Caco-2 (cell line): ENCODE measurements at regions of chr4 and their contacts with region 1.

Region 1: DNA sequence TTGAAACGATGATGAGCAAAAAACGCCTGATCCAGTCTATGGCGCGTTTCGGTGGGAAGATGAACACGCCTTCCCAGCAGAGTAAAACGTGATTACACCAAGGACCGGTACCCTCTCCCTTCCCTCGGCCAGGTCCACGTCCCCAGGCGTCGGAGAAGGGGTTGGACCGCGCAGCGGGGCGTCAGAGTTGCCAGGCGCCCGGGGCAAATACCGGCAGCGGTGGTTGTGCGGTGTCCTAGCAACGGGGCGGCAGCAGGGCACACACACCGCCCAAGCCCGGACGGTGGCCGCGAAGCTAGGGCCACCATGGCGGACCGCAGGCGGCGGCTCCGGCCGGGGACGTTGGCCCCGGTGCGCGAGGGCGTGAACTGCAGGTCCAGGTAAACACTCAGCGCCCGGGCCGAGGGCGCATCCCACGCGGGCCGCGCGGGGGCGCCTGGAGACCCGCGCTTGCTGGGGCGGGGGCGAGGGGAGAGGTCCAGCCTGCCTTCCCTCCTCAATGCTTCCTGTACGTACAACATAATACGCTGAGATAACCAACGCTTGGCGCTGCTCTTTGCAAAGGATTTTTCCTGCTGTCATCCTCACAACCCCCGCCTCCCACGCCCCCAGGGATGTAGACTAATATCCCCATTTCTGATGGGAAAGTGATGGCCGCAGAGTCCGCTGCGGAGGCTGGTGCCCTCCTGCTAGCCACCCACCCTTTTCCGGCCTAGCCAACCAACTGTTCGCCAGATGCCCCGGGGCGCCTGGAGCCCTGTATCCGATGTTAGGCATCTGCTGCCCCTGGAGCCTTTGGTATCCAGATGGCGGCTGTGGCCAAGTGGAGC is at the start of gene FAM47E:
- DNase-seq: peak; percentile 86 to 93
- H3K4me3 ChIP-seq: peak within 1 kb of the TSS; percentile 51
- H3K4me3 Mint-ChIP-seq: peak within 1 kb of the TSS; percentile 91
- H3K27ac Mint-ChIP-seq: peak within 1 kb of the TSS; percentile 96
- H3K4me1 ChIP-seq: peaks cover 12% of the 10 kb centered on the region
- H3K4me1 Mint-ChIP-seq: no peaks in the 10 kb centered on the region
- H3K27me3 ChIP-seq: no peaks in the 10 kb centered on the region
- H3K27me3 Mint-ChIP-seq: no peaks in the 10 kb centered on the region
- CTCF ChIP-seq: peak; percentile 51 to 72
- total RNA-seq, gene FAM47E: 6.3 and 6.6 TPM in 2 replicates

Region 2: DNA sequence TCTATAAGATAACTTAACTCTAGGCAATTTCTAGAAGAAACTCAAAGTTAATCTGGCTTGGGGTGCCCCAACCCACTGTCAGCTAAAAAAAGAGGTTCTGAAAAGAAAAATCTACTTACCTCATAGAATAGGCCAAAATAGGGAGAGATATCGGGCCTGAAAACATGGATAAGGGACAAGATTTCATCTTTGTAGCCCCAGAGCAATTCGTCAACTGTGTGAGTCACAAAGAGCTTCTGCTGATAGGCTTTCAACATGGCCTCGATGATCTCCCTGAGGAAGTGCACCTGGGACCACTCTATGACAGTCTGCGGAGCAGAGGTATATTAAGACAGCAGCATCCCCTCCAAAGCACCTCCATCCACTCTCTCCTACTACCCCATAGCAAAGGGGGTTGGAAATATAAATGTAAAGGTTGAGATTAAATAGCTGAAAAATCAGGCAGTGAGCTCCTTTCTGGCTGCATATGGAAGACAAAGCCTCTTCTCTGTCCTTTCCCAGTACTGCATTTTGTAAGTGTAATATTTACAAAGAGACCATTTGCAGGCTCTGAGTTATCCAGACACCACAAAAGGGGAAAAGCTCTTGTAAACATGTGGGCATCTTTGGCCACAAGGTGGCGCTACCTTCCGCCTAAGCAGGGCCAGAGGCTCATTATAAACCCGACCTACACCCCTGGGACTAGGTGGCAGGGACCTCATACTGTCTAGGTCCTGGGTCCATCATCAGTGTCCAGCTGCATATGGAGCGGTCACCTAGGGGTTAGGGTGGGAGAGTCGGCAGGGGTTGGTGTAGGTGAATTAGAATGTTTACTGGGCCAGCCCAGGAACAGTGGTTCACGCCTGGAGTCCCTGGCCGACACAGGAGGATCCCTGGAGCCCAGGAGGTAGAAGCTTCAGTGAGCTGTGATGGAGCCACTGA is 72.0 kb before region 1 on chr4:
- CTCF ChIA-PET with region 1: interaction called, 4 read pairs
- POLR2A ChIA-PET with region 1: no interaction called
- intact Hi-C with region 1: loop called (anchors 1 kb)
- DNase-seq: peak; percentile 80 to 86
- H3K4me3 ChIP-seq: no peak overlapping the region
- H3K4me3 Mint-ChIP-seq: no peak overlapping the region
- H3K27ac Mint-ChIP-seq: no peak overlapping the region
- H3K4me1 ChIP-seq: no peaks in the 10 kb centered on the region
- H3K4me1 Mint-ChIP-seq: no peaks in the 10 kb centered on the region
- H3K27me3 ChIP-seq: no peaks in the 10 kb centered on the region
- H3K27me3 Mint-ChIP-seq: no peaks in the 10 kb centered on the region
- CTCF ChIP-seq: peak; percentile 82 to 86

Region 3: GRCh38 chr4:76213415-76214176 is 38.1 kb before region 1 on chr4 and contains the start of gene SCARB2:
- CTCF ChIA-PET with region 1: no interaction called
- POLR2A ChIA-PET with region 1: interaction called, 4 read pairs
- intact Hi-C with region 1: loop called (anchors 1 kb)
- DNase-seq: peak; percentile 81 to 91
- H3K4me3 ChIP-seq: peak within 1 kb of the TSS; percentile 84
- H3K4me3 Mint-ChIP-seq: peak within 1 kb of the TSS; percentile 84
- H3K27ac Mint-ChIP-seq: peak within 1 kb of the TSS; percentile 83
- H3K4me1 ChIP-seq: peaks cover 52% of the 10 kb centered on the region
- H3K4me1 Mint-ChIP-seq: peaks cover 56% of the 10 kb centered on the region
- H3K27me3 ChIP-seq: no peaks in the 10 kb centered on the region
- H3K27me3 Mint-ChIP-seq: no peaks in the 10 kb centered on the region
- CTCF ChIP-seq: peak in 1 of 2 experiments; percentile 13
- total RNA-seq, gene SCARB2: 148 and 150 TPM in 2 replicates

Region 4: DNA sequence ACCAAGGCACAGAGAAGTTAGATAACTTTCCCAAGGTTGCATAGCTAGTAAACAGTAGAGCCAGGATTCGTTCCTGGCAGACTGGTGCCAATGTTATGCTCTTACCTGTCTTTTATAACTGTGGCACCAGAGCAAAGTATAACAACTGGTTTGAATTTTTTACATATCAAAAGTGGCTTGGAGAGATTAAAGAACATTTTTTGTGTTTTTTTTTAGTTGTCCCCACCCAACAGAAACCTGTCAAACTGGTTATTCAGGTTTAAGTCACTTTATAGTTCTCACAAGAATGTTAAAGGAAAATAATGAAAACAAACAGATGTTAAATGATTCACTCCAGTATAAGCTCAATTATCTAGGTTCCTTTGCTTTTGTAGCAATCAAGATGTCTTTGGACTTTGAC is 15.7 kb before region 1 on chr4:
- CTCF ChIA-PET with region 1: no interaction called
- POLR2A ChIA-PET with region 1: no interaction called
- intact Hi-C with region 1: loop called (anchors 1 kb)
- DNase-seq: peak in 1 of 2 experiments; percentile 74
- H3K4me3 ChIP-seq: peak overlapping the region; percentile 13; the same call in 1 of the 2 replicates
- H3K4me3 Mint-ChIP-seq: peak overlapping the region; percentile 70
- H3K27ac Mint-ChIP-seq: peak overlapping the region; percentile 95
- H3K4me1 ChIP-seq: peaks cover 59% of the 10 kb centered on the region
- H3K4me1 Mint-ChIP-seq: peaks cover 28% of the 10 kb centered on the region
- H3K27me3 ChIP-seq: no peaks in the 10 kb centered on the region
- H3K27me3 Mint-ChIP-seq: no peaks in the 10 kb centered on the region
- CTCF ChIP-seq: no peak

Region 5: DNA sequence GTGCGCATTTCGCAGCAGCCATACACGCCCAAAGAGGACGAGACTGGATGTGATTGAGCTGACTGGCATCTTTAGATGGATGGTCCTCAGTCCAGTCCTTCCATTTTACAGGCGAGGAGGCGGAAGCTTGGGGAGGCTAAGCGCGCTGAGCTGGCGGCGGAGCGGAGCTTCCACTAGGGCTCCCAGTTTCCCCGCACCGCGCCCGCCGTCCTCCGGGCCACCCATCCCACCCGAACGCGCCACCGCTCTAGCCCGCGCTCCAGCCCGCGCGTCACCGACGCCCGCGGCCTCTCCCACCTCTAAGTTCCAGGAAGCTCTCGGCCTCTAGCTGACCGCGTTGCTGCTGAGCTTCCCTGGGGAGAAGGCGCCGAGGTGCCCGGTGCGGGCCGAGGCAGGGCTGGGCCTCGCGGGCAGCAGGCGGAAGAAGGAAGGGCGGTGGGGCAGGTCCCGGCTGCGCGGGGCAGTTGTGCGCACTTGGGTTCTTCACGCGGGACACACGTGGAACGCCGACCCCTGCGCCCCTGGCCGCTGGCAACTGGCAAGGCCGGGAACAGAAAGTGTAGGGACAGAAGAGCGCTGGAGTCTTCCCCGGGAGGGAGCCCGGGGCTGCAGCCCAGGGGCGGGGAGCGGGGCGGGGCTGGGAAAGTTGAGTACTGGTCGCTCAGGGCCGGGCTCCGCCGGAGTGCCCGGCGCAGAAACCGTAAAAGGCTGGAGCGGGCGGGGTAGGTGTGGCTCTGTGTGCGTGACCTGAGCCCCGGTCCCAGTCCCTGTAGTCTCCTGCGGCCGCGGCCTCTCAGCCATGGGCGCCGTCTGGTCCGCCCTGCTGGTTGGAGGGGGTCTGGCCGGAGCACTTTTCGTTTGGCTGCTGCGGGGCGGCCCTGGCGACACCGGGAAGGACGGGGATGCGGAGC is 54.6 kb after region 1 on chr4 and contains the start of gene STBD1:
- CTCF ChIA-PET with region 1: interaction called, 6 read pairs
- POLR2A ChIA-PET with region 1: no interaction called
- intact Hi-C with region 1: loop called (anchors 1 kb)
- DNase-seq: peak; percentile 85 to 88
- H3K4me3 ChIP-seq: peak within 1 kb of the TSS; percentile 51
- H3K4me3 Mint-ChIP-seq: peak within 1 kb of the TSS; percentile 90
- H3K27ac Mint-ChIP-seq: peak within 1 kb of the TSS; percentile 71
- H3K4me1 ChIP-seq: peaks cover 22% of the 10 kb centered on the region
- H3K4me1 Mint-ChIP-seq: peaks cover 26% of the 10 kb centered on the region
- H3K27me3 ChIP-seq: no peaks in the 10 kb centered on the region
- H3K27me3 Mint-ChIP-seq: no peaks in the 10 kb centered on the region
- CTCF ChIP-seq: no peak
- total RNA-seq, gene STBD1: 3.8 and 4.2 TPM in 2 replicates

Region 6: GRCh38 chr4:76377911-76378310 is 126.3 kb after region 1 on chr4:
- CTCF ChIA-PET with region 1: interaction called, 12 read pairs
- POLR2A ChIA-PET with region 1: no interaction called
- intact Hi-C with region 1: loop called (anchors 1 kb)
- DNase-seq: peak; percentile 60 to 70
- H3K4me3 ChIP-seq: no peak overlapping the region
- H3K4me3 Mint-ChIP-seq: no peak overlapping the region
- H3K27ac Mint-ChIP-seq: no peak overlapping the region
- H3K4me1 ChIP-seq: peaks cover 18% of the 10 kb centered on the region
- H3K4me1 Mint-ChIP-seq: peaks cover 10% of the 10 kb centered on the region
- H3K27me3 ChIP-seq: no peaks in the 10 kb centered on the region
- H3K27me3 Mint-ChIP-seq: no peaks in the 10 kb centered on the region
- CTCF ChIP-seq: peak; percentile 63 to 71

Region 7: GRCh38 chr4:76430519-76431388 is 179.1 kb after region 1 on chr4:
- CTCF ChIA-PET with region 1: no interaction called
- POLR2A ChIA-PET with region 1: no interaction called
- intact Hi-C with region 1: loop called (anchors 1 kb)
- DNase-seq: peak in 1 of 2 experiments; percentile 44
- H3K4me3 ChIP-seq: peak overlapping the region; percentile 17; the same call in 1 of the 2 replicates
- H3K4me3 Mint-ChIP-seq: peak overlapping the region; percentile 9
- H3K27ac Mint-ChIP-seq: no peak overlapping the region
- H3K4me1 ChIP-seq: no peaks in the 10 kb centered on the region
- H3K4me1 Mint-ChIP-seq: no peaks in the 10 kb centered on the region
- H3K27me3 ChIP-seq: no peaks in the 10 kb centered on the region
- H3K27me3 Mint-ChIP-seq: peaks cover 3% of the 10 kb centered on the region
- CTCF ChIP-seq: peak; percentile 45 to 61